K562 (cell line): ENCODE measurements at regions of chr11 and their contacts with region 1.

Region 1: GRCh38 chr11:125568970-125569914 is at the start of gene EI24:
- DNase-seq: peak; percentile 89 to 97 (median 91)
- ATAC-seq: peak; percentile 98
- H3K4me3 ChIP-seq: peak within 1 kb of the TSS; percentile 88
- H3K27ac ChIP-seq: peak within 1 kb of the TSS; percentile 84
- H3K4me1 ChIP-seq: peaks cover 16 to 17% of the 10 kb centered on the region in 2 experiments; a peak in 4 of 5 replicates
- H3K27me3 ChIP-seq: no peaks in the 10 kb centered on the region
- CTCF ChIP-seq: peak; percentile 82 to 84 (median 82)
- EP300 ChIP-seq: no peak
- POLR2A ChIP-seq: peak; percentile 61; the same call in 1 of the 2 replicates
- RAD21 ChIP-seq: peak; percentile 65 to 68
- polyA plus RNA-seq, gene EI24: 50.4 to 72.2 TPM

Region 2: GRCh38 chr11:123800036-123800435 is 1769.2 kb before region 1 on chr11:
- CTCF ChIA-PET with region 1: no interaction called
- POLR2A ChIA-PET with region 1: no interaction called
- in situ Hi-C with region 1: no loop called
- intact Hi-C with region 1: no loop called
- DNase-seq: no peak
- ATAC-seq: no peak
- H3K4me3 ChIP-seq: no peak overlapping the region
- H3K27ac ChIP-seq: no peak overlapping the region
- H3K4me1 ChIP-seq: no peaks in the 10 kb centered on the region
- H3K27me3 ChIP-seq: no peaks in the 10 kb centered on the region
- CTCF ChIP-seq: no peak
- EP300 ChIP-seq: no peak
- POLR2A ChIP-seq: no peak
- RAD21 ChIP-seq: no peak

Region 3: DNA sequence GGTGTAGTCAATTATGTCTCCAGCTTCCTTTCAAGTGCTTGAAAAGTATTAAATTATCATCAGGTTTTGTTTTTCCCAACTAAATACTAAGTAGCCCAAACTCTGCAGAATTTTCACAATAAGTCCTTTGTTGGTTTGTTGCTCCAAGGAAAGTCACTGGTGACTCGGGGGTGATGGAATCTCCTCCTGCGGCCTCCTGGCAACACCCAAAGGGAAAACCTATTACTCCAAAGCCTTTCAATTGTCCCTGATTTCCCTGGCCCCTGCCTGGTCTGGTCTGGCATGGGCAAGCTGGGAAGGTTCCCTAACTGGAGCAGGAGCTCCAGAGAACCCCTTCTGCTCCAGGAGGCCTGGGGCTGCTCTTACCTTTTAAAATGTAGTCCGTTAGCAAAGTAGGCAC is 121.1 kb before region 1 on chr11:
- CTCF ChIA-PET with region 1: no interaction called
- POLR2A ChIA-PET with region 1: no interaction called
- in situ Hi-C with region 1: no loop called
- intact Hi-C with region 1: no loop called
- DNase-seq: no peak
- ATAC-seq: no peak
- H3K4me3 ChIP-seq: no peak overlapping the region
- H3K27ac ChIP-seq: no peak overlapping the region
- H3K4me1 ChIP-seq: peaks cover 18 to 29% of the 10 kb centered on the region in 2 experiments
- H3K27me3 ChIP-seq: no peaks in the 10 kb centered on the region
- CTCF ChIP-seq: no peak
- EP300 ChIP-seq: no peak
- POLR2A ChIP-seq: no peak
- RAD21 ChIP-seq: no peak

Region 4: GRCh38 chr11:125532668-125533067 is 36.6 kb before region 1 on chr11:
- CTCF ChIA-PET with region 1: no interaction called
- POLR2A ChIA-PET with region 1: interaction called, 4 read pairs
- in situ Hi-C with region 1: no loop called
- intact Hi-C with region 1: loop called (anchors 1 kb)
- DNase-seq: peak; percentile 40 to 91 (median 68)
- ATAC-seq: peak; percentile 98
- H3K4me3 ChIP-seq: no peak overlapping the region
- H3K27ac ChIP-seq: peak overlapping the region; percentile 68; the same call in 2 of the 3 replicates
- H3K4me1 ChIP-seq: peaks cover 17 to 36% of the 10 kb centered on the region in 2 experiments
- H3K27me3 ChIP-seq: no peaks in the 10 kb centered on the region
- CTCF ChIP-seq: no peak
- EP300 ChIP-seq: peak; percentile 90
- POLR2A ChIP-seq: no peak
- RAD21 ChIP-seq: no peak; a peak in 1 of 4 replicates

Region 5: GRCh38 chr11:125583496-125583895 is 14.3 kb after region 1 on chr11:
- CTCF ChIA-PET with region 1: interaction called, 3 read pairs
- POLR2A ChIA-PET with region 1: interaction called, 15 read pairs
- in situ Hi-C with region 1: no loop called
- intact Hi-C with region 1: no loop called
- DNase-seq: no peak
- ATAC-seq: no peak
- H3K4me3 ChIP-seq: no peak overlapping the region
- H3K27ac ChIP-seq: no peak overlapping the region
- H3K4me1 ChIP-seq: peaks cover 6 to 14% of the 10 kb centered on the region in 2 experiments
- H3K27me3 ChIP-seq: no peaks in the 10 kb centered on the region
- CTCF ChIP-seq: no peak
- EP300 ChIP-seq: no peak
- POLR2A ChIP-seq: no peak
- RAD21 ChIP-seq: no peak

Region 6: GRCh38 chr11:125592305-125593112 is 23.3 kb after region 1 on chr11 and contains the start of gene STT3A:
- CTCF ChIA-PET with region 1: interaction called, 3 read pairs
- POLR2A ChIA-PET with region 1: interaction called, 15 read pairs
- in situ Hi-C with region 1: no loop called
- intact Hi-C with region 1: loop called (anchors 1 kb)
- DNase-seq: peak; percentile 96 to 99 (median 98)
- ATAC-seq: peak; percentile 95
- H3K4me3 ChIP-seq: peak within 1 kb of the TSS; percentile 84
- H3K27ac ChIP-seq: peak within 1 kb of the TSS; percentile 96
- H3K4me1 ChIP-seq: peaks cover 23 to 25% of the 10 kb centered on the region in 2 experiments
- H3K27me3 ChIP-seq: no peaks in the 10 kb centered on the region
- CTCF ChIP-seq: no peak
- EP300 ChIP-seq: peak; percentile 49; the same call in 1 of the 2 replicates
- POLR2A ChIP-seq: peak; percentile 87
- RAD21 ChIP-seq: no peak
- polyA plus RNA-seq, gene STT3A: 197 to 330 TPM

Region 7: GRCh38 chr11:125625630-125626287 is 56.5 kb after region 1 on chr11:
- CTCF ChIA-PET with region 1: no interaction called
- POLR2A ChIA-PET with region 1: interaction called, 8 read pairs
- in situ Hi-C with region 1: no loop called
- intact Hi-C with region 1: loop called (anchors 5 kb)
- DNase-seq: peak; percentile 77 to 97 (median 82)
- ATAC-seq: peak; percentile 89
- H3K4me3 ChIP-seq: peak overlapping the region; percentile 80
- H3K27ac ChIP-seq: peak overlapping the region; percentile 93
- H3K4me1 ChIP-seq: peaks cover 9 to 10% of the 10 kb centered on the region in 2 experiments
- H3K27me3 ChIP-seq: no peaks in the 10 kb centered on the region
- CTCF ChIP-seq: no peak
- EP300 ChIP-seq: no peak
- POLR2A ChIP-seq: peak; percentile 98
- RAD21 ChIP-seq: no peak

Region 8: GRCh38 chr11:125750629-125751028 is 181.4 kb after region 1 on chr11:
- CTCF ChIA-PET with region 1: no interaction called
- POLR2A ChIA-PET with region 1: no interaction called
- in situ Hi-C with region 1: no loop called
- intact Hi-C with region 1: no loop called
- DNase-seq: peak in 1 of 4 experiments; percentile 9
- ATAC-seq: no peak
- H3K4me3 ChIP-seq: no peak overlapping the region
- H3K27ac ChIP-seq: no peak overlapping the region
- H3K4me1 ChIP-seq: no peaks in the 10 kb centered on the region
- H3K27me3 ChIP-seq: peaks cover 4% of the 10 kb centered on the region in 2 experiments; a peak in 4 of 5 replicates
- CTCF ChIP-seq: peak in 2 of 3 experiments; percentile 22; a peak in 2 of 6 replicates
- EP300 ChIP-seq: no peak
- POLR2A ChIP-seq: no peak
- RAD21 ChIP-seq: 0 out of 4 replicates have a peak, but pooled peaks of 1 of the 2 experiments have one; percentile 8

Region 9: GRCh38 chr11:126293726-126294125 is 724.5 kb after region 1 on chr11:
- CTCF ChIA-PET with region 1: no interaction called
- POLR2A ChIA-PET with region 1: no interaction called
- in situ Hi-C with region 1: no loop called
- intact Hi-C with region 1: no loop called
- DNase-seq: no peak
- ATAC-seq: no peak
- H3K4me3 ChIP-seq: no peak overlapping the region
- H3K27ac ChIP-seq: no peak overlapping the region
- H3K4me1 ChIP-seq: no peaks in the 10 kb centered on the region; a peak in 1 of 5 replicates
- H3K27me3 ChIP-seq: no peaks in the 10 kb centered on the region
- CTCF ChIP-seq: no peak
- EP300 ChIP-seq: no peak
- POLR2A ChIP-seq: no peak
- RAD21 ChIP-seq: no peak